ENCODE measurements at regions of chr4 and their contacts with region 1.

Region 1: DNA sequence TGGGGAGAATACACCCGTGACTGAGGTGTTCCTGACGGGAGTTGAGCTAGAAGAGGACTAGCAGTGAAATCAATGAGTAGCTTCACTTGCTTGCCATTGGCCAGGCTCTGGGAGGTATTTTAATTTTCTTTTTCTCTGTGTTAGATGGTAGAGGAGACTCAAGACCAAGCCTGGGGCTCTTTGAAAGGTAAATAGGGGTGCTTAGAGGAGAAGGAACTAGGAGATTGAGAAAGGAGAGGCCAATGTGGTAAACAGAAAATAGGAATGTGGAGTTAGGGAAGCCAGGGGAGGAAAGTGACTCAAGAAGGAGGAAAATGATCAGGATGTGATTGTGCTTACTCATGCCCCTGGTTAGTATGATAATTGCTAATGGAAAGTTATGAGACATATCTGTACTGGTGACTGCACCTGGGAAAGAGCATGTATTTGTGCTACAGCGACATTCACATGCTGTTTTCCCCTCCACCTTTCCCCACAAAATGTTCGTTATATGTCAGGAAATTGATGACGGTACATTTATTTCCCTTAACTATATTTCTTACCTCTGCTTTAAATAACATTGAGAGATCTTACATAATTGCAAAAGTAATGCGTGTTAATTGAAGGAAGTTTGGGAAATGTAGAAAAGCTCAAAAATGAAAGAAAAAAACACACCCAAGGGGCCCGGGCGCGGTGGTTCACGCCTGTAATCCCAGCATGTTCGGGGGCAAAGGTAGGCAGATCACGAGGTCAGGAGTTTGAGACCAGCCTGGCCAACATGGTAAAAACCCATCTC is 16.9 kb upstream of the LRBA start:
- DNase-seq: peak; percentile 20
- H3K4me3 Mint-ChIP-seq: peak overlapping the region; percentile 75
- H3K27ac Mint-ChIP-seq: peak overlapping the region; percentile 79
- H3K4me1 Mint-ChIP-seq: peaks cover 29% of the 10 kb centered on the region
- H3K27me3 Mint-ChIP-seq: no peaks in the 10 kb centered on the region

Region 2: GRCh38 chr4:150436598-150437370 is 595.2 kb before region 1 on chr4:
- CTCF ChIA-PET with region 1: no interaction called
- POLR2A ChIA-PET with region 1: no interaction called
- intact Hi-C with region 1: loop called (anchors 1 kb)
- DNase-seq: no peak
- H3K4me3 Mint-ChIP-seq: no peak overlapping the region
- H3K27ac Mint-ChIP-seq: peak overlapping the region; percentile 53
- H3K4me1 Mint-ChIP-seq: peaks cover 16% of the 10 kb centered on the region
- H3K27me3 Mint-ChIP-seq: no peaks in the 10 kb centered on the region

Region 3: GRCh38 chr4:150828159-150828558 is 203.9 kb before region 1 on chr4:
- CTCF ChIA-PET with region 1: no interaction called
- POLR2A ChIA-PET with region 1: no interaction called
- intact Hi-C with region 1: loop called (anchors 1 kb)
- DNase-seq: peak; percentile 76
- H3K4me3 Mint-ChIP-seq: no peak overlapping the region
- H3K27ac Mint-ChIP-seq: peak overlapping the region; percentile 72
- H3K4me1 Mint-ChIP-seq: peaks cover 42% of the 10 kb centered on the region
- H3K27me3 Mint-ChIP-seq: no peaks in the 10 kb centered on the region

Region 4: GRCh38 chr4:150960818-150961217 is 71.2 kb before region 1 on chr4:
- CTCF ChIA-PET with region 1: interaction called, 10 read pairs
- POLR2A ChIA-PET with region 1: interaction called, 3 read pairs
- intact Hi-C with region 1: loop called (anchors 2 kb)
- DNase-seq: peak; percentile 81
- H3K4me3 Mint-ChIP-seq: no peak overlapping the region
- H3K27ac Mint-ChIP-seq: no peak overlapping the region
- H3K4me1 Mint-ChIP-seq: peaks cover 47% of the 10 kb centered on the region
- H3K27me3 Mint-ChIP-seq: no peaks in the 10 kb centered on the region

Region 5: GRCh38 chr4:151015459-151016347 is 16.3 kb before region 1 on chr4:
- CTCF ChIA-PET with region 1: interaction called, 3 read pairs
- POLR2A ChIA-PET with region 1: interaction called, 46 read pairs
- intact Hi-C with region 1: loop called (anchors 1 kb)
- DNase-seq: peak; percentile 87
- H3K4me3 Mint-ChIP-seq: peak overlapping the region; percentile 100
- H3K27ac Mint-ChIP-seq: peak overlapping the region; percentile 95
- H3K4me1 Mint-ChIP-seq: peaks cover 23% of the 10 kb centered on the region
- H3K27me3 Mint-ChIP-seq: no peaks in the 10 kb centered on the region

Region 6: DNA sequence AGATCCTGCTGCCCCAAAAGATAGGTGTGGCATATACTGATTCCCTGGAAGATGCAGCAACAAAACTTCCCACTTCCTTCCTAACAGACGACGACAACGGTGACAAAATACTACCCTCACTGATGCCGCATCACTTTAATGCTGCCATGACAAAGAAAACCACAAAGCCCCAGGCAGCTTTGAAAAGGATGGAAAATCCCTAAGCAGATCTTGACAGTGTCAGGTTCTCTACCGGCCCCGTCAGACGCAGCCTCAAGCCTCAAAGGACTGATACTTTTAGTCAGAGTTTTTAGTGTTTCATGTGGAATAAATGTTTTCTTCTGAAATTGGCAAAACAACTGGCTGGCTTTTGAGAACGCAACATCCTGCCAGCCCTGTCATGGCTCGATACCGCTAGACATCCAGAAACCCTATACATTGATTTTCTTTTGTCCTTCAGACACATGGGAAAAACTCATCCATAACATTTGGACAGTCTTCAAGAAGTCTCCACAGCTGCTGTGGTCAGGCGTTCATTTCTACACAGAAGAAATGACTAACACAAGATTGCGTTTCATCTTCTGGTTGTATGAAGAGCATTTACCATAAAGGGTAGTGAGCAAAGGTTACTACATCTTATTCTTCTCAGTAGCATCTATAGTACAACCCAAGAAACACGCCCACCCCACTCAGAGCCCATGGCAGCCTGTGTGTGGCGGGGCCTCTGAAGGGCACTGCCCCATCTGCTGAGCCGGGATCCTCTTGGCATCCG is 668.7 kb after region 1 on chr4:
- CTCF ChIA-PET with region 1: no interaction called
- POLR2A ChIA-PET with region 1: no interaction called
- intact Hi-C with region 1: loop called (anchors 5 kb)
- DNase-seq: peak; percentile 63
- H3K4me3 Mint-ChIP-seq: no peak overlapping the region
- H3K27ac Mint-ChIP-seq: peak overlapping the region; percentile 75
- H3K4me1 Mint-ChIP-seq: peaks cover 8% of the 10 kb centered on the region
- H3K27me3 Mint-ChIP-seq: no peaks in the 10 kb centered on the region